IMR-90 (cell line): ENCODE measurements at regions of chr2 and their contacts with region 1.

Region 1: GRCh38 chr2:142675398-142675797 is 202.1 kb upstream of the KYNU start:
- DNase-seq: peak; percentile 25
- ATAC-seq: peak; percentile 75
- H3K4me3 ChIP-seq: no peak overlapping the region
- H3K27ac ChIP-seq: no peak overlapping the region
- H3K4me1 ChIP-seq: no peaks in the 10 kb centered on the region
- H3K27me3 ChIP-seq: no peaks in the 10 kb centered on the region
- CTCF ChIP-seq: no peak
- POLR2A ChIP-seq: no peak
- RAD21 ChIP-seq: no peak

Region 2: GRCh38 chr2:143068509-143068908 is 393.1 kb after region 1 on chr2:
- CTCF ChIA-PET with region 1: no interaction called
- POLR2A ChIA-PET with region 1: interaction called, 12 read pairs
- dilution Hi-C with region 1: no loop called
- in situ Hi-C with region 1: no loop called
- intact Hi-C with region 1: no loop called
- DNase-seq: no peak
- ATAC-seq: no peak
- H3K4me3 ChIP-seq: no peak overlapping the region
- H3K27ac ChIP-seq: no peak overlapping the region
- H3K4me1 ChIP-seq: no peaks in the 10 kb centered on the region
- H3K27me3 ChIP-seq: no peaks in the 10 kb centered on the region
- CTCF ChIP-seq: no peak
- POLR2A ChIP-seq: no peak
- RAD21 ChIP-seq: no peak